Activated CD4-positive, alpha-beta T cell treated with anti-CD3 and anti-CD28 coated beads for 36 hours (primary cell): ENCODE measurements at regions of chr4 and their contacts with region 1.

Region 1: DNA sequence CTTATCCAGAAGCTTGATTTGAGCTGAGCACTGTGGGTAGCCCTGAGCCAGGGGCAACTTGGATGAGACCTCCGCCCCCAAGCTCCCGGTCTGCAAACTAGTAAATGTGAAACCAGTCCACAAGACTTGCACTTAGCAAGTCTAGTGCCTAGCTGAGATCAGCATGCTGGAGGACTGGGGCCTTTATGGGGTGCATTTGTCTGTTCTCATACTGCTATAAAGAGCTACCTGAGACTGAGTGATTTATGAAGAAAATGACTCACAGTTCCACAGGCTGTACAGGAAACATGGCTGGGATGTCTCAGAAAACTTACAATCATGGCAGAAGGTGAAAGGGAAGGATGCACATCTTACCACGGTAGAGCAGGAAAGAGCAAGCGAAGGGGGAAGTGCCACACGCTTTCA is 42.1 kb upstream of the HOPX start:
- DNase-seq: peak; percentile 80
- ATAC-seq: peak; percentile 97
- H3K4me3 Mint-ChIP-seq: peak overlapping the region; percentile 4
- H3K27ac Mint-ChIP-seq: peak overlapping the region; percentile 87
- H3K4me1 Mint-ChIP-seq: peaks cover 23% of the 10 kb centered on the region
- H3K27me3 Mint-ChIP-seq: no peaks in the 10 kb centered on the region

Region 2: DNA sequence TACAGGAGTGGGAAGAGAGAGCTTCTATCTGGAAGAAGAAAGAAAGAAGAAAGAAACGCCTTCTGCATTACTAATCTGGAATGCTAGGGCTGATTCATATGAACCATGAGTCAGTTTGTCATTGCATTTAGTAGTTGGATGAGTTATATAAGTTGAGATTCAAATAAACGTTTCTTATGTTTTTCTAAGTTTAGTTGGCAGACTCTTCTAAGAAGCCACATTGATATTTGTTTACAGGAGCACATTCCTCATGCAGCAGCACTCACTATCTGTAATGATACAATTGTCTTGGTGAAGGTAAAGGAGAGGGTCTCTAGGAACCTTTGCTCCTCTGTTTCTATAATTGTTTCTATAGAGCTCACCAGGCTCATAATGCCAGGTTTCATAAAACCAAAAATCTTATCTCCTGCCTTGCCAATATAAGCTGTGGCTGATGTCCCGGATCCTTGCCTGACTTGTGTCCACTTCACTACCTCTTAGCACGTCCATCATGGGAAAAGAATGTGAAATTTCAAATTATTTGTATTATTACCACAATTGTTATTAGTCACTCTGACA is 81.6 kb before region 1 on chr4:
- CTCF ChIA-PET with region 1: interaction called, 12 read pairs
- POLR2A ChIA-PET with region 1: no interaction called
- intact Hi-C with region 1: loop called in 1 of 2 experiments (anchors 1 kb)
- DNase-seq: no peak
- ATAC-seq: peak; percentile 80
- H3K4me3 Mint-ChIP-seq: no peak overlapping the region
- H3K27ac Mint-ChIP-seq: peak overlapping the region; percentile 82
- H3K4me1 Mint-ChIP-seq: peaks cover 36% of the 10 kb centered on the region
- H3K27me3 Mint-ChIP-seq: no peaks in the 10 kb centered on the region

Region 3: DNA sequence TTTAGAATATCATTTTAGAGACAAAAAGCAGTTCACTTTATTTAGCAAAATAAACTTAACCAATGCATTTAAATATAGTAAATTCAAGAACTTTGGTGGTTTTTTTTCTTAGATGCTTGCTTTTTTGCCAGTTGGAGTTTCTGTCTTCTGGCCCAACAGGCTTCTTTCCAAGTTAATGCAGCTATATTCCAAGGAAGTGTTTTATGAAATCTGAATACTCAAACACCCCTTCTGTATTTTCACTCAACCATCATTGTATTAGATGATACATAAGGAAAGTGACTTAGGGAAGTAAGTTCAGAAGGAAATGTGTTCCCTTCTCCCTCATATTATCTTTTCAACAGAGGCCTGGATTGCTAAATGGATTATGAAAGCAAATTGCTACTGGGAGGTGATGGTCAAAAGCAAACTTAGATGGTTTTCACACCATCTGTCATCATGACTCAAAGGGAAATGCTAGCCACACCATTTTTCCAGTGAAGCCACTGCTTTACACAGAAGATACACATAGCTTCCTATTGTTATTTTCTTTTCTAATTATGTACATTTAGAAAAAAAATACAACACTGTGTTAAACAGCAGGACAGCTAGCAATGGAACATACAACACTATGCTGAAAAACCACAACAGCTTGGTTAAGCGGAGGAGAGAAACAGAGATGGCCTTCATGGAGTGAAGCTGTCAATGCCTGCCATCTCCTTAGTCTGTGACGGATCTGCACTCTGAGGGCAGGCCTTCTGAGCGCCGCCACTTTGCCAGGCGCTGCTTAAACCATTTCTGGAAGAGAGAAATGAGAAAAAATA is 75.0 kb before region 1 on chr4:
- CTCF ChIA-PET with region 1: no interaction called
- POLR2A ChIA-PET with region 1: interaction called, 4 read pairs
- intact Hi-C with region 1: loop called (anchors 2 kb)
- DNase-seq: peak; percentile 39
- ATAC-seq: peak; percentile 27
- H3K4me3 Mint-ChIP-seq: no peak overlapping the region
- H3K27ac Mint-ChIP-seq: peak overlapping the region; percentile 70
- H3K4me1 Mint-ChIP-seq: peaks cover 61% of the 10 kb centered on the region
- H3K27me3 Mint-ChIP-seq: no peaks in the 10 kb centered on the region

Region 4: GRCh38 chr4:56757821-56758411 is 34.7 kb after region 1 on chr4:
- CTCF ChIA-PET with region 1: interaction called, 3 read pairs
- POLR2A ChIA-PET with region 1: interaction called, 3 read pairs
- intact Hi-C with region 1: loop called (anchors 1 to 2 kb)
- DNase-seq: peak; percentile 92
- ATAC-seq: peak; percentile 98
- H3K4me3 Mint-ChIP-seq: peak overlapping the region; percentile 49
- H3K27ac Mint-ChIP-seq: peak overlapping the region; percentile 91
- H3K4me1 Mint-ChIP-seq: peaks cover 59% of the 10 kb centered on the region
- H3K27me3 Mint-ChIP-seq: no peaks in the 10 kb centered on the region